ENCODE measurements at regions of chr21 and their contacts with region 1.

Region 1: DNA sequence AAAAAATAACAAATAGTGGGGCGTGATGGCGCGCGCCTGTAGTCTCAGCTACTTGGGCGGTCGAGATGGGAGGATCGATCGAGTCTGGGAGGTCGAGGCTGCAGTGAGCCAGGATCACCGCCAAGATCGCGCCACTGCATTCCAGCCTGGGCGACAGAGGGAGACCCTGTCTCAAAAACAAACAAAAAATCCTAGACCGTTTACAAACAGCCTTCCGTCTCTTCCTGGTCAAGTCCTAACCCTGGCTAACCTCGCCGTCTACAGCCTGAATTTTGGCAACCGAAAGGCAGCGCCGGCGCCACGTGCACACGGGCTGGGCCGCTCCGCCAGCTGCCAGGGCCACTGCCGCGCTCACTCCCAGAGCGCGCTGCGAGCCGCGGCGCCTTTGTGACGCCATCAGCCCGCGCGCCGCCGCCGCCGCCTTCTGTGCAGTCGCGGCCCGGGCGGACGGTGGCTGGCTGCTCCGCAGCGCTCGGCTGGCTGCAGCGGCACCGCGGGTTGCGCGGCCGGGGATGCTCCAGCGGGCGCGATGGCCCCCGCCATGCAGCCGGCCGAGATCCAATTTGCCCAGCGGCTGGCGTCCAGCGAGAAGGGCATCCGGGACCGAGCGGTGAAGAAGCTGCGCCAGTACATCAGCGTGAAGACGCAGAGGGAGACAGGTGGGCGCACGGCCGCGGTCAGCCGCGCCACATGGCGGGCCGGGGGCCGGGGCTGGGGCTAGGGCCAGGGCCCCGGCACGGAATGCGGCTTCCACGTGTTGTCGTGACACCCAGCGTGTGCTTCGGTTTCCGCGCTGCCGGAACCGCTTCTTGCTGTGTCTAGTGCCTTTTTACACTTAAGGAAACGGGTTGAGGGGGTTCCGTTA is at the starts of genes HSF2BP and RRP1B:
- DNase-seq: peak; percentile 55 to 73
- H3K4me3 ChIP-seq: peak within 1 kb of the TSS; percentile 91
- H3K27ac ChIP-seq: peak within 1 kb of the TSS; percentile 65
- H3K4me1 ChIP-seq: peaks cover 30% of the 10 kb centered on the region
- H3K27me3 ChIP-seq: no peaks in the 10 kb centered on the region
- CTCF ChIP-seq: no peak
- total RNA-seq, gene HSF2BP: 4.6 and 7.3 TPM in 2 replicates
- total RNA-seq, gene RRP1B: 26.1 and 26.3 TPM in 2 replicates

Region 2: GRCh38 chr21:43712308-43712974 is 53.1 kb after region 1 on chr21:
- CTCF ChIA-PET with region 1: no interaction called
- POLR2A ChIA-PET with region 1: no interaction called
- intact Hi-C with region 1: loop called (anchors 5 kb)
- DNase-seq: peak; percentile 84 to 94
- H3K4me3 ChIP-seq: peak overlapping the region; percentile 72; the same call in 1 of the 2 replicates
- H3K27ac ChIP-seq: peak overlapping the region; percentile 100
- H3K4me1 ChIP-seq: peaks cover 29% of the 10 kb centered on the region
- H3K27me3 ChIP-seq: no peaks in the 10 kb centered on the region
- CTCF ChIP-seq: no peak

Measured in PC-9 (cell line).